ENCODE measurements at regions of chr16 and their contacts with region 1.

Region 1: DNA sequence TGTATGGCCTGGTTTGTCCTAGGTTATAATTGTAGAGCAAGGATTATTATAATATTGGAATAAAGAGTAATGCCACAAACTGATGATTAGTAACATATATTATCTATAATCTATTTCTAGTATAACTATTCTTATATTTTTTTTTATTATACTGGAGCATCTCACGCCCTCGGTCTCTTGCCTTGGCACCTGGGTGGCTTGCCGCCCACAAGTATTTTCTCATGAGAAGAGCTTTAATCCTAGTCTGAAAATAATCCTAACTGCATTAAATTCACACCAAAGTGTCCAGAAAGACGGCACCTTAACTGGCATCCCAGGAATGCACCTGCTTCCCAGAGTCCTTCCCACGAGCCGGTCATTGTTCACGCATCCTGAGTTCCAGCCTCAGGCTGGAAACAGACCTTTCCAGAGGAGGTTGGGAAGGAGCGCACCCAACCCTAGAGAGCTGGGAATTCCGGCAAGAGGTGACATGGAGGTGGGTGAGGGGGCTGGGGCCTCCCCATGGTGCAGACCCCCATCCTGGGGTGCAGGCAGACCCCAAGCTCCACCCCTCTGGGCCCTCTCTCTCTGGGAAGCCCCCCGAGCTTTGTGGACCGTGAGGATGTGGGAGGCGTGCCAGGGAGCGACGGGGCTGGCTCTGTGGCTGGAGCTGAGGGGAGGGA is 15.9 kb downstream of the CHMP1A start:
- DNase-seq: no peak
- H3K4me3 ChIP-seq: no peak overlapping the region
- H3K27me3 ChIP-seq: no peaks in the 10 kb centered on the region
- CTCF ChIP-seq: no peak

Region 2: DNA sequence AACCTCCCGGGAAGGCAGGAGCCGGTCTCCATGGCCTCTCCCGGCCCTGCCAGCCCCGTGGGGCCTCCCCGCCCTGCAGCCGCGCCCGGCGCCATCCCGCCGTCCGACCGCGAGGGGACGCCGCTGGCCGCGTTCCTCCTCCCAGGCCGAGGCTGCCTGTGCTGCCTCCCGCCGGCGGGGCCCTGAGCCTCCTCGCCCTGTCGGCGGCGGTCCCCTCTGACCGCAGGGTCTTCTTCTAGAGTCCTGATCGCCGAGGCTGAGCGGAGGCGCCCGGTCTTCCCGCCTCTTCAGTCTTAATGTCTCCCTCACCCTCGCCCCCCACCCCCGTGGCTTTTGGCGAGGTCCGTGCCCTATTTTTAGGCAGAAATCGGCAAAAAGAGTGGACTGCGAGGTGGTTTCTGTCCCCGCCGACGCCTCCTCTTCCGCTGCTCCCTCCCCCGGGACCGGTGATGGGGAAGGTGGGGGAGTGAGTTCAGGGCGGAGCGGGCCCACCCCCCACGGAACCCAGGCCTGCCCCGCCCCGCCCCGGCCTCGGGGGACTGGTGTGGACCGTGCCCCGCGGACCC is 66.8 kb before region 1 on chr16:
- CTCF ChIA-PET with region 1: interaction called, 35 read pairs
- POLR2A ChIA-PET with region 1: no interaction called
- DNase-seq: no peak
- H3K4me3 ChIP-seq: peak overlapping the region; percentile 33
- H3K27me3 ChIP-seq: no peaks in the 10 kb centered on the region
- CTCF ChIP-seq: peak; percentile 51

Region 3: GRCh38 chr16:89623511-89624261 is 17.9 kb before region 1 on chr16:
- CTCF ChIA-PET with region 1: interaction called, 10 read pairs
- POLR2A ChIA-PET with region 1: no interaction called
- DNase-seq: no peak
- H3K4me3 ChIP-seq: no peak overlapping the region
- H3K27me3 ChIP-seq: peaks cover 10% of the 10 kb centered on the region
- CTCF ChIP-seq: no peak